ENCODE measurements at regions of chr2 and their contacts with region 1.

Region 1: GRCh38 chr2:206085742-206086445 is at the start of gene INO80D:
- DNase-seq: peak; percentile 87 to 88
- H3K4me3 ChIP-seq: peak within 1 kb of the TSS; percentile 77
- H3K4me3 Mint-ChIP-seq: peak within 1 kb of the TSS; percentile 93
- H3K27ac Mint-ChIP-seq: peak within 1 kb of the TSS; percentile 97
- H3K4me1 ChIP-seq: no peaks in the 10 kb centered on the region
- H3K4me1 Mint-ChIP-seq: peaks cover 18% of the 10 kb centered on the region
- H3K27me3 ChIP-seq: no peaks in the 10 kb centered on the region
- H3K27me3 Mint-ChIP-seq: no peaks in the 10 kb centered on the region
- CTCF ChIP-seq: peak; percentile 48 to 68
- total RNA-seq, gene INO80D: 19.8 and 21.8 TPM in 2 replicates

Region 2: DNA sequence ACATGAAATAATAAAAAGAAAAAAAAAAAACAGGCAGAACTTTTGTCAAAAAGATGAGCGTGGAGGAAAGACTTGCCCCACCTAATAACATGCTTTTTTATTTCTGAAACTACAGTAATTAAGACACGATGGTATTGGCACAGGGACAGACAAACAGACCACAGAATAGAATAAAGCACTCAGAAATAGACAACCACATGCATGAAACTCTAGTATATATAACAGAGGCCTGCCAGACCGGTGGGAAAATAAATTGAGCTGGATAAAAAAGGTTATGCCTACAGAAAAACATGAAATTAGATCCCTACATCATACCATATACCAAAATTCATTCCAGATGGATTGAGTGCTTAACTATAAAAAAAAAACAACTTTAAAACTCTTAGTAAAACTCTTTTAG is 240.4 kb before region 1 on chr2:
- CTCF ChIA-PET with region 1: no interaction called
- POLR2A ChIA-PET with region 1: no interaction called
- intact Hi-C with region 1: no loop called
- DNase-seq: no peak
- H3K4me3 ChIP-seq: no peak overlapping the region
- H3K4me3 Mint-ChIP-seq: no peak overlapping the region
- H3K27ac Mint-ChIP-seq: no peak overlapping the region
- H3K4me1 ChIP-seq: no peaks in the 10 kb centered on the region
- H3K4me1 Mint-ChIP-seq: peaks cover 6% of the 10 kb centered on the region
- H3K27me3 ChIP-seq: no peaks in the 10 kb centered on the region
- H3K27me3 Mint-ChIP-seq: peaks cover 11% of the 10 kb centered on the region
- CTCF ChIP-seq: no peak

Region 3: DNA sequence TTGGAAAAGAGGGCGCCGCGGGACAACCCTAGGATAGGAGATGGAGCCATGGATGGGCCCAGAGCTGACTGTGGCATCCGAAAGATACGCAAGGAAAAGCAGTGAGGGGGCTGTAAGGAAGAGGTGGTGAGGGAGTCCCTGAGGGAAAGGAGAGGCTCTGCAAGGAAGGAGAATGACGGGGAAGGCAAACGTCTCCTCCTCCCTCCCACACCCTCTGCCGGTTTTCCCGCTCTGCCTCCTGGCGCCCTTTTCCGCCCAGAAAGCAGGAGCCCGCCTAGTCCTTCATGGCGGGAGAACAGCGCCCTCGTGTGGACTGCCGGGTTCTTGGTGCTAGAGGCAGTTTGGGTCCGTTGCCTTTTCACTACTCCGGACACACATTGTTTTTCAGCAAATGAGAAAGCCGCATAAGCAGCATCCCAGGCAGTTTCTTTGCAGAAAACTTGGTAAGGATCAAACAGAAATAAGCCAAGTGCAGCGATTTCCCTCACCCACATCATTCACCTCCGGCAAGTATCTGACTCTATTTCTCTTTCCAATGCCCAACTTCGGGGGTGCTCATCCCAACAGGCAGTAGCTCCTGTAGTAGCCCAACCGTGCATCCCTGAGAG is 200.3 kb before region 1 on chr2:
- CTCF ChIA-PET with region 1: no interaction called
- POLR2A ChIA-PET with region 1: no interaction called
- intact Hi-C with region 1: no loop called
- DNase-seq: peak; percentile 81 to 86
- H3K4me3 ChIP-seq: no peak overlapping the region
- H3K4me3 Mint-ChIP-seq: no peak overlapping the region
- H3K27ac Mint-ChIP-seq: no peak overlapping the region
- H3K4me1 ChIP-seq: no peaks in the 10 kb centered on the region
- H3K4me1 Mint-ChIP-seq: no peaks in the 10 kb centered on the region
- H3K27me3 ChIP-seq: no peaks in the 10 kb centered on the region
- H3K27me3 Mint-ChIP-seq: peaks cover 3% of the 10 kb centered on the region
- CTCF ChIP-seq: peak; percentile 77 to 90

Region 4: DNA sequence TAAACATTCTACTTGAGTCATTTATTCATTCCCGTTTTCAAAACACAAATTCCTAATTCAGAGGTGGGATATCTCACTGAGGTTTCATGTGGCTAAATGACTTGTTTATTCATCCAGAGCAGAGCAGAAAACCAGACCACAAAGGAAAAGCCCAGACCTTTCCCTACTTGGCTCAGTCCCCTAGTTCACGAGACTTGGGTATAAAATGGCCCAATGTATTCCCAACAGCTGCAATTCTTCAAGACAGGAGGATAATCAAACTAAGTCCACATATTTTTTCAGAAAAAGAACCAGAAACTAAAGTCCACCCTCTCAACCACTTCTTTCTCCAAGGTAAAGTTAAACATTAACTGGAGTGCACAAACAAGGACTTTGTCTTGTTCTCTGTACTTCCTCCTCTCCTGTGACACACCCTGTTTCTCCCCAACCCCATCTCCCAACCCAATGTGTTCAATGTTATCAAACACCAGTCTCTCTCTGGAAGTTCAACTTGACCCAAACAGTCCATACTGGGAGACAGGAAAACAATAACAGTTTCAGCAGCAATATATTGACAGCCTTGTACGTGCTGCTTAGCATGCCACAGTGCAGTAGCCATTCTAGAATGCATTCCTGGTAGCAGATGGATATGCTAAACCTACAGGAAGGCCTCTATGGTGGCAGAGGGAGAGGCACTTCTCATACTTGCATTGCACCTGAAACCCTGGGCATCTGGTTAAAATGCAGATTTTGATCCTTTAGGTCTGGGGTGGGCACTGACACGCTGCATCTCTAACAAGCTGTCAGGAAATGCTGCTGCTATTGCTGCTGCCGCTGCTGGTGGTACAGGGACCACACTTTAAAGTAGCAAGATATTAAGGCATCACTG is 110.6 kb before region 1 on chr2:
- CTCF ChIA-PET with region 1: no interaction called
- POLR2A ChIA-PET with region 1: no interaction called
- intact Hi-C with region 1: loop called (anchors 5 kb)
- DNase-seq: peak; percentile 80 to 87
- H3K4me3 ChIP-seq: no peak overlapping the region
- H3K4me3 Mint-ChIP-seq: peak overlapping the region; percentile 66
- H3K27ac Mint-ChIP-seq: peak overlapping the region; percentile 83
- H3K4me1 ChIP-seq: peaks cover 41% of the 10 kb centered on the region
- H3K4me1 Mint-ChIP-seq: peaks cover 20% of the 10 kb centered on the region
- H3K27me3 ChIP-seq: no peaks in the 10 kb centered on the region
- H3K27me3 Mint-ChIP-seq: no peaks in the 10 kb centered on the region
- CTCF ChIP-seq: no peak

Measured in Caco-2 (cell line).